Panc1 (cell line): ENCODE measurements at regions of chr11 and their contacts with region 1.

Region 1: GRCh38 chr11:66616379-66617154 is at the start of gene RBM14:
- DNase-seq: peak; percentile 96
- ATAC-seq: peak; percentile 98
- H3K4me3 ChIP-seq: peak within 1 kb of the TSS; percentile 84 to 99
- H3K27ac ChIP-seq: peak within 1 kb of the TSS; percentile 96
- H3K4me1 ChIP-seq: peaks cover 23% of the 10 kb centered on the region
- H3K27me3 ChIP-seq: no peaks in the 10 kb centered on the region
- CTCF ChIP-seq: no peak
- total RNA-seq, gene RBM14: 93.9 TPM

Region 2: GRCh38 chr11:66568124-66568916 is 48.2 kb before region 1 on chr11 and contains the start of gene CTSF:
- CTCF ChIA-PET with region 1: no interaction called
- POLR2A ChIA-PET with region 1: no interaction called
- in situ Hi-C with region 1: no loop called
- intact Hi-C with region 1: no loop called
- DNase-seq: peak; percentile 28
- ATAC-seq: peak; percentile 92
- H3K4me3 ChIP-seq: peak within 1 kb of the TSS; percentile 45 to 47
- H3K27ac ChIP-seq: no peak within 1 kb of the TSS
- H3K4me1 ChIP-seq: no peaks in the 10 kb centered on the region
- H3K27me3 ChIP-seq: no peaks in the 10 kb centered on the region
- CTCF ChIP-seq: no peak
- total RNA-seq, gene CTSF: 28.7 TPM

Region 3: GRCh38 chr11:66638177-66639065 is 21.9 kb after region 1 on chr11 and contains the start of gene RBM4:
- CTCF ChIA-PET with region 1: no interaction called
- POLR2A ChIA-PET with region 1: interaction called, 13 read pairs
- in situ Hi-C with region 1: no loop called
- intact Hi-C with region 1: no loop called
- DNase-seq: peak; percentile 99
- ATAC-seq: peak; percentile 96
- H3K4me3 ChIP-seq: peak within 1 kb of the TSS; percentile 91 to 93
- H3K27ac ChIP-seq: peak within 1 kb of the TSS; percentile 97
- H3K4me1 ChIP-seq: peaks cover 47% of the 10 kb centered on the region
- H3K27me3 ChIP-seq: no peaks in the 10 kb centered on the region
- CTCF ChIP-seq: no peak
- total RNA-seq, gene RBM4: 195 TPM

Region 4: DNA sequence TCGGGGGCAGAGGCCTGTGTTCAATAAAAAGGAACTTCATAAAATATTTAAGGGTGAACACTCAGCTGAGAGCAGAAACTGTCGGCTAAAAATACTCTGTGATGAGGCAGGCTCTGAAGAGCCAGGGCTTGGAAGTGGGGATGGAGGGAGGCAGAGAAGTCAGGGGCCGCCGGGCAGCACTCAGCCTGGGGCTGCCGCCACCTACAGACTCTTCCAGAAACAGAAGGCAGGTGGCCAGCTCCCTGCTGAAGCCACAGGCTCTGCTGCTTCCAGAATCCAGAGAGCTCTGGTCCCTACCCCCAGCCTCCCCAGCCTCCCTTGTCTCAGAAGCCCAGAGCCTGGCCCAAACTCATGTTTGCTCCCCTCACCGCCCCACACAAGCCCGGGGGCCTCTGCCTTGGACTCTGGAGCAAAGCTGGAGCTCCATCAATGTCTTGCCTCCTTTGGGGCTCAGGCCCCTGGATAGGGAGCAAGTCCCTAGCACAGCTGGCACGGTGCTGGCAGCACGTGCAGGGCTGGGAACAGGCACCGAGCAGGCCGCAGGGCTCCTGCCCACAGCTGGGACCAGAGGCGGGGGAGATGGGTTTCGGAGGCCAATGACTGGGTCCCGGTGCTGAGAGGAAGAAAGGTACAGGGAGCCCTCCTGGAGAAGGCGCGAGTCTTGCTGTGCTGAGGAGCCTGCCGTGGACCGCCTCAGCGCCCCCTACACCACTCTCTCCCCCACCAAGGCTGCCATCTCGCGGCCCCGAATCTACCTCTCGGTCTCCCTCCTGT is 248.5 kb after region 1 on chr11:
- CTCF ChIA-PET with region 1: no interaction called
- POLR2A ChIA-PET with region 1: no interaction called
- in situ Hi-C with region 1: no loop called
- intact Hi-C with region 1: no loop called
- DNase-seq: no peak
- ATAC-seq: 0 out of 2 replicates have a peak, but pooled peaks have one; percentile 12
- H3K4me3 ChIP-seq: no peak overlapping the region
- H3K27ac ChIP-seq: no peak overlapping the region
- H3K4me1 ChIP-seq: peaks cover 8% of the 10 kb centered on the region
- H3K27me3 ChIP-seq: no peaks in the 10 kb centered on the region
- CTCF ChIP-seq: no peak; the same call in 1 of the 2 replicates

Region 5: DNA sequence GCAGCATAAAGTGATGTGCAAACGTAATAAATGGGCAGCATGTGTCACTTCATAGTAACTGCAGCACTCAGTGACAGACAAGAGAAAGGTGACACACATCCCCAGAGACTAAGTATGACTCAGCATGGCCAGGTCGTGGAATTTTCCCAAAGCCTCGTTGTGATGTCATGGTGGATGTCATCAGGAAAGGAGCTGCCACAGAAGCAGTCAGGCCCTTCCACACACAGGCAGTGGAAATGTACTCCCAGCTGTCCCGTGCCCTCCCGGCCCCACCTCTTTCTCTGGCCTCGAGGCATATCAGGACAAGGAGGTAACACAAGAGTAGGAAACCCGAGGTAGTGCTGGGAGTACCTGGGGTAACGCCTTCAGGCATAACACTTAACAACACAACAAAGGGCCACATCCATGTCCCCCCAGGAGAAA is 333.6 kb after region 1 on chr11:
- CTCF ChIA-PET with region 1: no interaction called
- POLR2A ChIA-PET with region 1: no interaction called
- in situ Hi-C with region 1: no loop called
- intact Hi-C with region 1: no loop called
- DNase-seq: peak; percentile 91
- ATAC-seq: peak; percentile 90
- H3K4me3 ChIP-seq: no peak overlapping the region
- H3K27ac ChIP-seq: peak overlapping the region; percentile 64
- H3K4me1 ChIP-seq: peaks cover 15% of the 10 kb centered on the region
- H3K27me3 ChIP-seq: no peaks in the 10 kb centered on the region
- CTCF ChIP-seq: no peak